ENCODE measurements at regions of chr15 and their contacts with region 1.

Region 1: DNA sequence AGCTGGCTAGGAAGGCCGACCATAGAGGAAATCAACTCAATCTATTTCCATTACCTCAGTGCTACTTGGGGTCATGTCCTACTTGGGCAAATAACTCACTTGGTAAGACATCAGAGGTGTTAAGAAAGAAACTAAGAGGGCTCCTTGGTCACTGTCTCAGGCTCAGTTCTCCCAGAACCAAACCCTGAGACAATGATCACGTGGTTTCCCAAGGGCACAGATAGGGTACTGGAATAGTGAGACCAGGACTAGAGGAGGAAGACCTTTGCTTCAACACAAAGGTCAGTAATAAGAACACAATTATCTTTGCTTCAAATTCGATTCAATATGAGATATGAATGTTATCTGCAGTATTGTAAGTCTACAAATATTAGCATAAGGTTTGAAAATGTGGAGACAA is 309.3 kb downstream of the MCTP2 start:
- DNase-seq: no peak
- H3K4me3 ChIP-seq: no peak overlapping the region
- H3K27ac ChIP-seq: no peak overlapping the region
- H3K4me1 ChIP-seq: no peaks in the 10 kb centered on the region
- CTCF ChIP-seq: no peak

Region 2: DNA sequence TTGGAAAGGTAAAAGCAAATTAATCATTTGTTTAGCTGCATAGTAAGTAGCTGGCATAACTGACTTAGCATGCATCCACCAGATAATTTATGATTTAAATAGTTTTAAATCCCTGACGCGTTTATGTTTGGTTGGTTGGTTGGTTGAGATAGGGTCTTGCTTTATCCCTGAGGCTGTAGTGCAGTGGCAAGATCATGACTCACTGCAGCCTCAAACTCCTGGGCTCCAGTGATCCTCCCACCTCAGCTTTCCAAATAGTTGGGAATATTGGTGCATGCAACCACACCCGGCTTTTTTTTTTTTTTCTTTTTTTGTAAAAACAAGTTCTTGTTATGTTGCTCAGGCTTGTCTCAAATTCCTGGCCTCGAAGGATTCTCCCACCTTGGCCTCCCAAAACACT is 45.9 kb before region 1 on chr15:
- CTCF ChIA-PET with region 1: no interaction called
- POLR2A ChIA-PET with region 1: no interaction called
- intact Hi-C with region 1: loop called (anchors 1 kb)
- DNase-seq: no peak
- H3K4me3 ChIP-seq: no peak overlapping the region
- H3K27ac ChIP-seq: no peak overlapping the region
- H3K4me1 ChIP-seq: peaks cover 10% of the 10 kb centered on the region
- CTCF ChIP-seq: no peak

Measured in OCI-LY7 (cell line).